Caco-2 (cell line): ENCODE measurements at regions of chrX and their contacts with region 1.

Region 1: GRCh38 chrX:100098660-100099375 is 311.3 kb downstream of the PCDH19 start:
- DNase-seq: peak in 1 of 2 experiments; percentile 0
- H3K4me3 ChIP-seq: no peak overlapping the region
- H3K4me3 Mint-ChIP-seq: no peak overlapping the region
- H3K27ac Mint-ChIP-seq: no peak overlapping the region
- H3K4me1 ChIP-seq: no peaks in the 10 kb centered on the region
- H3K4me1 Mint-ChIP-seq: no peaks in the 10 kb centered on the region
- H3K27me3 ChIP-seq: no peaks in the 10 kb centered on the region
- H3K27me3 Mint-ChIP-seq: no peaks in the 10 kb centered on the region
- CTCF ChIP-seq: no peak

Region 2: GRCh38 chrX:100072336-100072735 is 26.5 kb before region 1 on chrX:
- CTCF ChIA-PET with region 1: no interaction called
- POLR2A ChIA-PET with region 1: no interaction called
- intact Hi-C with region 1: no loop called
- DNase-seq: no peak
- H3K4me3 ChIP-seq: no peak overlapping the region
- H3K4me3 Mint-ChIP-seq: no peak overlapping the region
- H3K27ac Mint-ChIP-seq: no peak overlapping the region
- H3K4me1 ChIP-seq: no peaks in the 10 kb centered on the region
- H3K4me1 Mint-ChIP-seq: no peaks in the 10 kb centered on the region
- H3K27me3 ChIP-seq: no peaks in the 10 kb centered on the region
- H3K27me3 Mint-ChIP-seq: no peaks in the 10 kb centered on the region
- CTCF ChIP-seq: no peak

Region 3: GRCh38 chrX:100194082-100194775 is 95.4 kb after region 1 on chrX:
- CTCF ChIA-PET with region 1: no interaction called
- POLR2A ChIA-PET with region 1: no interaction called
- intact Hi-C with region 1: no loop called
- DNase-seq: no peak
- H3K4me3 ChIP-seq: no peak overlapping the region
- H3K4me3 Mint-ChIP-seq: no peak overlapping the region
- H3K27ac Mint-ChIP-seq: no peak overlapping the region
- H3K4me1 ChIP-seq: no peaks in the 10 kb centered on the region
- H3K4me1 Mint-ChIP-seq: no peaks in the 10 kb centered on the region
- H3K27me3 ChIP-seq: no peaks in the 10 kb centered on the region
- H3K27me3 Mint-ChIP-seq: peaks cover 6% of the 10 kb centered on the region
- CTCF ChIP-seq: no peak

Region 4: GRCh38 chrX:100395781-100396180 is 297.0 kb after region 1 on chrX:
- CTCF ChIA-PET with region 1: no interaction called
- POLR2A ChIA-PET with region 1: interaction called, 13 read pairs
- intact Hi-C with region 1: no loop called
- DNase-seq: no peak
- H3K4me3 ChIP-seq: no peak overlapping the region
- H3K4me3 Mint-ChIP-seq: no peak overlapping the region
- H3K27ac Mint-ChIP-seq: no peak overlapping the region
- H3K4me1 ChIP-seq: no peaks in the 10 kb centered on the region
- H3K4me1 Mint-ChIP-seq: no peaks in the 10 kb centered on the region
- H3K27me3 ChIP-seq: no peaks in the 10 kb centered on the region
- H3K27me3 Mint-ChIP-seq: peaks cover 7% of the 10 kb centered on the region
- CTCF ChIP-seq: no peak